Calu3 (cell line): ENCODE measurements at regions of chr14 and their contacts with region 1.

Region 1: GRCh38 chr14:37565550-37565949 is 29.5 kb downstream of the FOXA1 start:
- DNase-seq: peak; percentile 57
- H3K4me3 Mint-ChIP-seq: peak overlapping the region; percentile 64
- H3K27ac Mint-ChIP-seq: peak overlapping the region; percentile 96
- H3K4me1 Mint-ChIP-seq: peaks cover 35% of the 10 kb centered on the region
- H3K27me3 Mint-ChIP-seq: no peaks in the 10 kb centered on the region
- CTCF ChIP-seq: peak; percentile 48

Region 2: DNA sequence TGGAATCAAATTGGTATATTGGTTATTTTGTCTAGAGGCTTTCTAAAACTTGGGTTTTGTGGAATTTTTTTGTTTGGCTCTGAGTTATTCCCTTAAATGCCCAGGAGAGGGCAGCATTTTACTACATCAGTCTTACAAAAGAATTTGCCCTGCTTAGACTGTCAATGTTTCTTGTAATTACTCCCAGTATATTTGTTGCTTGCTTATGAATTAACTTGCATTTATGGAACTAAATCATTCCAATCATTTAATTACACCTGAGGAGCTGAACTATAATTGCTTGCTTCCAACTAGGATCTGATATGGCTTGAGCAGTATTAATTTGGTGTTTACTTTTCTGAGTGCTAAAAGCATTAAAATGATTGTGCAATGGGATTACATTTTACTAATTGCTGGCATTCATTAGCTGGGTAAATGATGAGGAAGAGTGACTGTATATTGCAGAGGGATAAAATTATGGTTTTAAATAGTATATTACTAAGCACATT is 319.1 kb before region 1 on chr14:
- CTCF ChIA-PET with region 1: interaction called, 3 read pairs
- intact Hi-C with region 1: loop called (anchors 1 kb)
- DNase-seq: no peak
- H3K4me3 Mint-ChIP-seq: no peak overlapping the region
- H3K27ac Mint-ChIP-seq: no peak overlapping the region
- H3K4me1 Mint-ChIP-seq: no peaks in the 10 kb centered on the region
- H3K27me3 Mint-ChIP-seq: no peaks in the 10 kb centered on the region
- CTCF ChIP-seq: peak; percentile 60

Region 3: GRCh38 chr14:37340355-37340754 is 225.2 kb before region 1 on chr14:
- CTCF ChIA-PET with region 1: no interaction called
- intact Hi-C with region 1: loop called (anchors 5 kb)
- DNase-seq: peak; percentile 6
- H3K4me3 Mint-ChIP-seq: no peak overlapping the region
- H3K27ac Mint-ChIP-seq: no peak overlapping the region
- H3K4me1 Mint-ChIP-seq: no peaks in the 10 kb centered on the region
- H3K27me3 Mint-ChIP-seq: no peaks in the 10 kb centered on the region
- CTCF ChIP-seq: peak; percentile 24

Region 4: GRCh38 chr14:37369425-37369824 is 196.1 kb before region 1 on chr14:
- CTCF ChIA-PET with region 1: no interaction called
- intact Hi-C with region 1: no loop called
- DNase-seq: no peak
- H3K4me3 Mint-ChIP-seq: no peak overlapping the region
- H3K27ac Mint-ChIP-seq: no peak overlapping the region
- H3K4me1 Mint-ChIP-seq: no peaks in the 10 kb centered on the region
- H3K27me3 Mint-ChIP-seq: no peaks in the 10 kb centered on the region
- CTCF ChIP-seq: no peak

Region 5: GRCh38 chr14:37447883-37448391 is 117.6 kb before region 1 on chr14:
- CTCF ChIA-PET with region 1: no interaction called
- intact Hi-C with region 1: loop called (anchors 1 kb)
- DNase-seq: no peak
- H3K4me3 Mint-ChIP-seq: no peak overlapping the region
- H3K27ac Mint-ChIP-seq: peak overlapping the region; percentile 89
- H3K4me1 Mint-ChIP-seq: peaks cover 15% of the 10 kb centered on the region
- H3K27me3 Mint-ChIP-seq: no peaks in the 10 kb centered on the region
- CTCF ChIP-seq: no peak

Region 6: DNA sequence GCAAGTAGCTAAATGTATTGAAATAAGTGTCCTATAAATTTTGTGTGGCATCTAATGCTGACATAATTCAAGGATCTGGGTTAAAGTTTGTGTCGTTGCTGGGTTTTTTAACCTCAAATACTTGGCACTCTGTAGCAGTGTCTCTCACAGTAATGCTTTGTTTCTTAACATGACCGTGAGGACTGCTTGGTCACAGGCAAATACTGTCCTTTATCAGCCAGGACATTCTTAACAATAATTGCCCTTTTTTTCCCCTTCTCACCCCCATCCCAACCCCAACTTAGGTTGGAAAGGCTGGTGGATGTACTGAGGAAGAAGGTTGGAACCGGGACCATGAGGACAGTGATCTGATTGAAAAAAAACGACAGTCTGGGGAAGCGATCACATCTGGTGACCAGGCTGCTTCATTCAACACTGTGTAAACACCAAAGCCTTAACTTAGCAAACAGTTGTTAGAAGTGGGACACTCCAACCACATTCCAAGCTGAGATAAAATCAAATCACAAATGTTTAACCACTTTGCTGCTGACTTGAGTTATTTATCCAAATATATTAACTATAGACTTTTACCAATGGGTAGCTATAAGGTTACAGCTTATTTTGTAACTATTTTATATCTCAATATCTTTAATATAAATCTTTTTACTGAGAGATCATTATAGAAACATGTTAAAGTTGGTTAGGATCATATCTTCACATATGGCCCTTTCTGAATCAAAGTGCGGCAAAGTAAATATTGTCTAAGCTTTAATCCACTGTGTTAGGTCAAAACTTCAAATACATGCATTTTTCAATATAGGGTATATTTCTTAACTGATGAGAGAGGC is 18.7 kb before region 1 on chr14:
- CTCF ChIA-PET with region 1: interaction called, 3 read pairs
- intact Hi-C with region 1: loop called (anchors 2 kb)
- DNase-seq: peak; percentile 30
- H3K4me3 Mint-ChIP-seq: peak overlapping the region; percentile 61
- H3K27ac Mint-ChIP-seq: peak overlapping the region; percentile 85
- H3K4me1 Mint-ChIP-seq: peaks cover 26% of the 10 kb centered on the region
- H3K27me3 Mint-ChIP-seq: no peaks in the 10 kb centered on the region
- CTCF ChIP-seq: no peak